ENCODE measurements at regions of chr1 and their contacts with region 1.

Region 1: DNA sequence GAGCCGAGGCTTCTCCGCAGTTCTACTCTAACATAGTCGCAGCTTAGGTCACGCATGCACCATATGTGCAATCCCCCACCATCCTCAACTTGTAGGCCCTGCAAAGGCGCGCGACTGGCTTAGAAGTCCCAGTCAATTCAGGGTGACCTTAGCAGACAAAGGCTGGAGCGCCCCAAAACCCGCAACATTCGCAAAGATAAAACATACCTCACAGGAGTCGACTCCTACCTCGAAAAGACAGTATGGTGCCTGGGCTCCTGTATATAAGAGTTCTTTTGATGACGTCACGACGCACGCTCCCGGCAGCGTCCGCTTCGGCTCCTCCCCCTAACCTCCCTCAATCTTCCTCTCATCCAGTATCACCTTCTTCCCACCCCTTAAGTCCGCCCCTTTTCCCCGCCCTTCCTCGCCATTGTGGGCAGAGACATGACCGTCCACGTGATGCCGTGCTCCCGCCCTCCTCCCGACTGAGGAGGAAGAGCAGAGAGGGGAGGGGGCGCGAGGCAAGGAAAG is at the start of gene GAS5:
- DNase-seq: peak; percentile 99 to 100
- H3K4me3 ChIP-seq: peak within 1 kb of the TSS; percentile 85 to 97
- H3K27ac ChIP-seq: peak within 1 kb of the TSS; percentile 93 to 99
- H3K4me1 ChIP-seq: peaks cover 4 to 10% of the 10 kb centered on the region in 2 donors
- H3K27me3 ChIP-seq: no peaks in the 10 kb centered on the region
- CTCF ChIP-seq: no peak
- total RNA-seq, gene GAS5: 149 TPM

Region 2: GRCh38 chr1:173420330-173420806 is 447.4 kb before region 1 on chr1:
- intact Hi-C with region 1: loop called (anchors 2 kb)
- DNase-seq: peak in 1 of 2 donors; percentile 69
- H3K4me3 ChIP-seq: peak overlapping the region in 1 of 2 donors; percentile 16
- H3K27ac ChIP-seq: no peak overlapping the region
- H3K4me1 ChIP-seq: no peaks in the 10 kb centered on the region
- H3K27me3 ChIP-seq: no peaks in the 10 kb centered on the region
- CTCF ChIP-seq: peak; percentile 56 to 80 (median 72)

Region 3: GRCh38 chr1:173824331-173825081 is 43.3 kb before region 1 on chr1 and contains the starts of genes CENPL and DARS2:
- intact Hi-C with region 1: loop called (anchors 1 kb)
- DNase-seq: peak; percentile 85 to 98
- H3K4me3 ChIP-seq: peak within 1 kb of the TSS; percentile 65 to 71
- H3K27ac ChIP-seq: peak within 1 kb of the TSS; percentile 90 to 96
- H3K4me1 ChIP-seq: peaks cover 0 to 5% of the 10 kb centered on the region in 2 donors
- H3K27me3 ChIP-seq: no peaks in the 10 kb centered on the region
- CTCF ChIP-seq: no peak
- total RNA-seq, gene CENPL: 0.53 TPM
- total RNA-seq, gene DARS2: 12.1 TPM

Region 4: DNA sequence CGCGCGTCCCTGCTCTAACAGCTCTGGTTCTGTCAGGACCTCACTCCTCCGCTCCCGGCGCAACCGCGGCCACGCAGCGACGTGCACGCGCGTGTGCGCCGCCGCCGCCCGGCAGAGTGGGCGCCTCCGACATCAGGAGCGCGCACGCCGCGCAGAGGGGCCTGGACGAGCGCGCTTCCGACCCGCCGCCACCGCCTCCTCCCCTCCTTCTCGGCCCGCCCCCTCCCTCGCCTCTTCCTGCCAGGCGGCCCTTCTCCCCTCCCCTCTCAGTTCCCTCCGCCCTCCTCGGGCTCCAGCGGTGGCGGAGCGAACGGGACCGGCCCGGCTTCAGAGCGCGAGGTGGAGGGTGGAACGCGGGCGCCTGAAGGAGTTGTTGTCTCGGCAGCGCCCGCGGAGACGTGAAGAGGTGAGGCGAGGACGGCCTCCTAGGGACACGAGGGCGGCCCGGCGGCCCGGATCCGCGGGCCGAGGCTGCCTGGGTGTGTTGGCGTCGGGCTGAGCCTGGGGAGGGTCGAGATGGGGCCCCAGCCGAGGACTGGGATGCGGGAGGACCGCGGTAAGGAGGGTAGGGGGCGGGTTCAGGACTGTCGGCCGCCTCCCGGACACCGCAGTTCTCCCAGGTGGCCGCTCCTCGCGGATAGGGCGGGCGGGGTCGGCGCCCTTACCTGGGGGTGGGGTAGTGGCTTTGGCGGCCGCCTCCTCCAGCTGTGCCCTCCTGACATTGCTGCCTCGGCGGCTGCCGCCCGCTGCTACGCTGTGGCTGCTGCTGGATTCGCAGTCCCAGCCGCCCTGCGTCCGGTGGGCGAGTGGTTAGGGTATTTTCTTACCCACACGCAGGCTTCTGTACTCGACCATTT is 291.7 kb after region 1 on chr1 and contains the start of gene RABGAP1L:
- intact Hi-C with region 1: loop called (anchors 2 kb)
- DNase-seq: peak; percentile 69 to 96
- H3K4me3 ChIP-seq: peak within 1 kb of the TSS; percentile 62 to 96
- H3K27ac ChIP-seq: peak within 1 kb of the TSS; percentile 82 to 92
- H3K4me1 ChIP-seq: peaks cover 0 to 7% of the 10 kb centered on the region in 2 donors
- H3K27me3 ChIP-seq: no peaks in the 10 kb centered on the region
- CTCF ChIP-seq: no peak
- total RNA-seq, gene RABGAP1L: 48.4 TPM

Region 5: GRCh38 chr1:175023043-175023921 is 1155.5 kb after region 1 on chr1 and contains the start of gene MRPS14:
- intact Hi-C with region 1: loop called (anchors 10 kb)
- DNase-seq: peak; percentile 91 to 99
- H3K4me3 ChIP-seq: peak within 1 kb of the TSS; percentile 75 to 89
- H3K27ac ChIP-seq: peak within 1 kb of the TSS; percentile 63 to 81
- H3K4me1 ChIP-seq: peaks cover 0 to 4% of the 10 kb centered on the region in 2 donors
- H3K27me3 ChIP-seq: no peaks in the 10 kb centered on the region
- CTCF ChIP-seq: no peak
- total RNA-seq, gene MRPS14: 8.2 TPM

Measured in ascending aorta (tissue), 2 donors.